BJ (cell line): ENCODE measurements at regions of chr12 and their contacts with region 1.

Region 1: DNA sequence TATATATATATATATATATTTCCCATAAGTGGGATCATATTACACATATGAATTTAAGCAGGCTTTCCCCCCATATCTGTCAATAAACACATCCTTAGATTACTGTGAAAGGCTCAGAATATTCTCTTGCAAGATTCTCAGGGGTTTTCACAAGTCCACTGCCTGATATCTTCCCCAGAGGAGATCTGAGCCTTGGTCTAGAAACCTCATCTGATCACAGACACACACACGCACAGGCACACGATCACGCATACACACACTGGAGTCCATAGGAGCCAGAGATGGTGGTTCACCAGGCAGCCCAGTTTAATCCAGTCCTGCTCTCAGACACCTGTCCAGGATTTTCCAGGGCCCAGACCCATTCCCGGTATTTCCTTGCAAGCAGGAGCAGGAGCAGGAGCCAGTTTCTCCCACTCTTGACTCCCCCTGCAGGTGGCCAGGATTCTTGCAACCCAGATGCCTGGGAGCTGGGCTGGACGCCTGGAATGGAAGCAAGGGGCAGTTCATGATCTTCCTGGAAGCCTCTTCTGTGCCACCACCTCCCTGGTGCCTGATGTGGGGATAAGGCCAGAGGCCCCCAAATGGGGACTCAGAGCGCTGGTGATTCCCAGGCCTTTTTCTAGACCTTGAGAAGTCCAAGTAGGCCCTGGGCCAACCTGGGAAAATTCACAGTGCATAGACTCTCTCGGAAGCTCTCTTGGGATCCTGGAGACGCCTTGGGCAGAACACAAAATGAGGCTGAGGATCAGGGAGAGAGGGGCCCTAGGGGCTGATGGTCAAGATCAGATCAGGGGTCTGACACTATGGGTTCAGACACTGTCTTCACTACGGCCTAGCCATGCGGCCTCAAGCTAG is 16.5 kb upstream of the KRT78 start:
- DNase-seq: no peak
- H3K4me3 ChIP-seq: no peak overlapping the region
- H3K27me3 ChIP-seq: no peaks in the 10 kb centered on the region
- CTCF ChIP-seq: peak; percentile 96

Region 2: DNA sequence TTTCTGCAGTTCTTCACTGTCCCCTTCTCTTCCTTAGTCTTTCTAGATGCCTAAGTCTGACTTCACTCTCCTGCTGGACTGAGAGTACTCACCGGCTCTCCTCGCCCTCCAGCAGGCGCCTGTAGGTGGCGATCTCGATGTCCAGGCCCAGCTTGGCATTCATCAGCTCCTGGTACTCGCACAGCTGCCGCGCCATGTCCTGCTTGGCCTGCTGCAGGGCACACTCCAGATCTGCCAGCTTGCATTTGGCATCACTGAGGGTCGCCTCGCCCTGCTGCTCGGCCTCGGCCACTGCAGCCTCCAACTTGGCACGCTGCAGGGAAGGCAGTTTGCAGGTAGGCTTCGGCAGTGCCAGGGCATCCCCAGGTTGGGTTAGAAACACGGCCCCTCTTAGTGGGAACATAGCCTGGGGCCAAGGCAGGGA is 485.0 kb before region 1 on chr12:
- CTCF ChIA-PET with region 1: interaction called, 12 read pairs
- POLR2A ChIA-PET with region 1: no interaction called
- DNase-seq: no peak
- H3K4me3 ChIP-seq: no peak overlapping the region
- H3K27me3 ChIP-seq: peaks cover 9% of the 10 kb centered on the region
- CTCF ChIP-seq: peak; percentile 64

Region 3: GRCh38 chr12:52582971-52583456 is 282.3 kb before region 1 on chr12:
- CTCF ChIA-PET with region 1: interaction called, 44 read pairs
- POLR2A ChIA-PET with region 1: no interaction called
- DNase-seq: no peak
- H3K4me3 ChIP-seq: no peak overlapping the region
- H3K27me3 ChIP-seq: peaks cover 16% of the 10 kb centered on the region
- CTCF ChIP-seq: peak; percentile 76

Region 4: GRCh38 chr12:52990206-52990605 is 124.9 kb after region 1 on chr12:
- CTCF ChIA-PET with region 1: no interaction called
- POLR2A ChIA-PET with region 1: no interaction called
- DNase-seq: no peak
- H3K4me3 ChIP-seq: no peak overlapping the region
- H3K27me3 ChIP-seq: no peaks in the 10 kb centered on the region
- CTCF ChIP-seq: no peak